Right cardiac atrium (tissue), 5 donors: ENCODE measurements at regions of chr6 and their contacts with region 1.

Region 1: GRCh38 chr6:137799950-137800568 is 67.0 kb upstream of the TNFAIP3 start:
- DNase-seq: no peak
- ATAC-seq: peak; percentile 72 to 73
- H3K4me3 ChIP-seq: no peak overlapping the region
- H3K27ac ChIP-seq: no peak overlapping the region
- H3K4me1 ChIP-seq: peaks cover 2% of the 10 kb centered on the region
- H3K27me3 ChIP-seq: no peaks in the 10 kb centered on the region

Region 2: DNA sequence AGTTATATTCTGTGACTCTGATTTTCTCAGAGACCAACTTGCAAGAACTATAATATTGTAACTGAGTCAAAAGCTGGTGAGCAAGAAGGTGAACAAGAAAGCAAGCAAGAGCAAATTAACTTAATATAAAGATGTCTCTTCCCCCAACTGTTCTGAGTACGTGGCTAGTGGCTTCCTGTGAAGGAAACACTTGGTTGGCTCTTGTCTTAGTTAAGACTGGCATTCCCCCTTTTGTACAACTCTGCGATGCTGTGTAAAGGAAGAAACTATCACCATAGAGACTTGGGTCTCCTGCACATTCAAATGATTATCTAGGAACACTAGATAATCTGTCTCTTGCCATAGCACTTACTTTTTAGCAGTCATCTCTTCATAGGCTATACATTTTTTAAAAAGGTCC is 19.7 kb after region 1 on chr6:
- intact Hi-C with region 1: loop called in 1 of 4 experiments (anchors 2 kb)
- DNase-seq: no peak
- ATAC-seq: no peak
- H3K4me3 ChIP-seq: no peak overlapping the region
- H3K27ac ChIP-seq: no peak overlapping the region
- H3K4me1 ChIP-seq: peaks cover 9% of the 10 kb centered on the region
- H3K27me3 ChIP-seq: no peaks in the 10 kb centered on the region

Region 3: GRCh38 chr6:137866914-137867684 is 67.0 kb after region 1 on chr6 and contains the start of gene TNFAIP3:
- intact Hi-C with region 1: loop called in 1 of 4 experiments (anchors 10 kb)
- DNase-seq: peak; percentile 95 to 97 (median 96)
- ATAC-seq: peak; percentile 91 to 93
- H3K4me3 ChIP-seq: peak within 1 kb of the TSS; percentile 78
- H3K27ac ChIP-seq: peak within 1 kb of the TSS; percentile 78
- H3K4me1 ChIP-seq: peaks cover 5% of the 10 kb centered on the region
- H3K27me3 ChIP-seq: no peaks in the 10 kb centered on the region
- total RNA-seq, gene TNFAIP3: 7.6 to 11.4 (median 10.7) TPM